Activated T-helper 2 cell treated with anti-CD3 and anti-CD28 coated beads, Interferon-gamma antibody, Interleukin-2, Interleukin-4, amounts not matched to agents 10 μg/mL and 5 μg/mL and 100 μg/mL, durations not matched to agents 14 hours and 24 hours and 36 hours (primary cell): ENCODE measurements at regions of chr6 and their contacts with region 1.

Region 1: GRCh38 chr6:37169496-37170272 is at the start of gene PIM1:
- DNase-seq: peak; percentile 93
- H3K4me3 Mint-ChIP-seq: peak within 1 kb of the TSS; percentile 94
- H3K27ac Mint-ChIP-seq: peak within 1 kb of the TSS; percentile 95
- H3K4me1 Mint-ChIP-seq: peaks cover 35% of the 10 kb centered on the region
- H3K27me3 Mint-ChIP-seq: no peaks in the 10 kb centered on the region
- total RNA-seq, gene PIM1: 151 and 161 TPM in 2 replicates

Region 2: GRCh38 chr6:36216559-36216958 is 953.1 kb before region 1 on chr6:
- intact Hi-C with region 1: no loop called
- DNase-seq: no peak
- H3K4me3 Mint-ChIP-seq: no peak overlapping the region
- H3K27ac Mint-ChIP-seq: no peak overlapping the region
- H3K4me1 Mint-ChIP-seq: peaks cover 8% of the 10 kb centered on the region
- H3K27me3 Mint-ChIP-seq: no peaks in the 10 kb centered on the region

Region 3: GRCh38 chr6:36885461-36886401 is 284.0 kb before region 1 on chr6 and contains the start of gene C6orf89:
- intact Hi-C with region 1: loop called (anchors 1 kb)
- DNase-seq: peak; percentile 95
- H3K4me3 Mint-ChIP-seq: peak within 1 kb of the TSS; percentile 87
- H3K27ac Mint-ChIP-seq: peak within 1 kb of the TSS; percentile 80
- H3K4me1 Mint-ChIP-seq: peaks cover 32% of the 10 kb centered on the region
- H3K27me3 Mint-ChIP-seq: no peaks in the 10 kb centered on the region
- total RNA-seq, gene C6orf89: 28.4 and 29.9 TPM in 2 replicates

Region 4: GRCh38 chr6:37011656-37012378 is 157.9 kb before region 1 on chr6:
- intact Hi-C with region 1: no loop called
- DNase-seq: no peak
- H3K4me3 Mint-ChIP-seq: no peak overlapping the region
- H3K27ac Mint-ChIP-seq: no peak overlapping the region
- H3K4me1 Mint-ChIP-seq: no peaks in the 10 kb centered on the region
- H3K27me3 Mint-ChIP-seq: no peaks in the 10 kb centered on the region

Region 5: DNA sequence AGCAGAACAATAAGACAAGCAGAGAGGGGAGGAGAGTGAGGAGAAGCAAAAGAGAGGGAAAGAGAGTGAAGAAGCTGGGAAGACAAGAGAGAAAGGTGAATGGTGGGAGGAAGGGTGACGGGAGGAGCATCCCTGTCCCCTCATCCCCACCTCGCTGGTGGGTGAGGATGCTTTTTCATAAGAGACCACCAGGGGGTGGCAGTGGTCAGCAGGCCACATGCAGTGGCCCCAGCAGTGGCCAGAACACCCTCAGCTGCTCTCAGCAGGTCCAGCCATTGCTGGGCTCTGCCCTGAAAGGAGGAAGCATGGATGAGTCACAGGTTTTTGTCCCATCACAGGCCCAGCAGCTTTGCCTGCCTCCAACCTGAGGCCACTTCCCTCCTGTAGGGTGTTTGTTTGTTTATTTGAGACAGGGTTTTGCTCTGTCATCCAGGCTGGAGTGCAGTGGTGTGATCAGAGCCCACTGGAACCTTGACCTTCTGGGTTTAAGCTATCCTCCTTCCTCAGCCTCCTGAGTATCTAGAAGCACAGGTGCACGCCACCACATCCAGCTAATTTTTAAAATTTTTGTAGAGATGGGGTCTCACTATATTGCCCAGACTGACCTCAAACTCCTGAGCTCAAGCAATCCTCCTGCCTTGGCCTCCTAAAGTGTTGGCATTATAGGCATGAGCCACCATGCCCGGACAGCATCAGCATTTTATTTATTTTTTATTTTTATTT is 140.3 kb before region 1 on chr6:
- intact Hi-C with region 1: loop called (anchors 1 kb)
- DNase-seq: peak; percentile 33
- H3K4me3 Mint-ChIP-seq: no peak overlapping the region
- H3K27ac Mint-ChIP-seq: peak overlapping the region; percentile 56
- H3K4me1 Mint-ChIP-seq: peaks cover 53% of the 10 kb centered on the region
- H3K27me3 Mint-ChIP-seq: no peaks in the 10 kb centered on the region

Region 6: DNA sequence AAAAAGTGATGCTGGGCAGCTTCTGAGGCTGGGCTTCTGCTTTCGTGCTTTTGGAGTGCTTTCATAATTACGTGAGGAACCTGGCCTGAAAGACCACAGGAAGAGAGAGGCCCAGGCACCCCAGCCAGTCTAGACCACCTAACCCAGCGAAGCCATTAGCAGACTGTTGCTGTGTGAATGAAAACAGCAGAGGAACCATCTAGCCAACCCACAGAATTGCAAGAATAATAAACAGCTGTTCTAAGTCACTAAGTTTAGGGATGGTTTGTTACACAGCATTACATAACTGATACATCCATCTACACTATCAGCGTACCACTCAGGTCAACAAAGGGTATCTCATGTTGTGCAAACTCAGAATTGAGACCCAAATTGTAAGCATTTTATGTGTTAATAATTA is 129.7 kb before region 1 on chr6:
- intact Hi-C with region 1: no loop called
- DNase-seq: no peak
- H3K4me3 Mint-ChIP-seq: no peak overlapping the region
- H3K27ac Mint-ChIP-seq: no peak overlapping the region
- H3K4me1 Mint-ChIP-seq: peaks cover 43% of the 10 kb centered on the region
- H3K27me3 Mint-ChIP-seq: no peaks in the 10 kb centered on the region

Region 7: DNA sequence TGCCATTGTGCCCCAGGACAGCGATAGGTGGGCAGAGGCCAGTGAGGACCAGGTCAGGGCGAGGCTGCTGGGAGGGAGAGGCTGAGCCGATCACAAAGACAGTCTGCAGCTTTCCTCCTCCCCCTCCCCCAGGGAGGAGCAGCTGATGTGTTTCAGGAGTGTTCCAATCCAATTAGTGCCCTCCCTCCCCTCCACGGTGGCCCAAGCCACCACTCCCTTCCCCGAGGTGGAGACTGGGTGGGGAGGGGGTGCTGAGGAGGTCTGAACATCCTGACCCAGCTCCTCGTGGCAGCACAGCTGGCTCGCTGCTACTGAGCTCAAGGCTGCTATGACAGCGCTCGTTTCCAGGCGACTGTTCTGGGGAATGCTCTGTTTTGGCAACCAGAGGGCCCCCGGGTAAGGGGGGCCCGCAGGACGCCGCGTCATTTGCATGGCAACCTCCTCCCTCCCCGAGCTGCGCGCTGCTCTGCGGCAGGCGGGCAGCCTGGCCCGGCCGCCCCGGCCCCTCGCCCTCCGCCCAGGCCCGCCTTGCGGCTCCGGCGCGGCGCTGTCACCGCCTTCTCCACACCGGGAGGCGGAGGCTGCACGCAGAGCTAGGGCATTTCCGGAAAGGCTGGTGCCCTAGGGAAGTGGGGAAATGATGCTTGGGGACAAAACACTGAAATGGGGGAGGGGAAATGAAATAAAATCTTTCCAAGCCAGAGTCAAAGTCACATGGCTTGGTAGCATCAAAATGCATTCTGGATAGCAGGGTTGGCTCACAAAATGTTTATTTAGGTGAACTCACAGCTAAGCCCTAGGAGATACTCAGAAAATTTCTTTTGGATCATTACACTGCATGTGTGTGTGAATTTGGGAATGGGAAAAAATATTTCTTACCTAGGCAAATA is 67.2 kb before region 1 on chr6:
- intact Hi-C with region 1: loop called (anchors 1 kb)
- DNase-seq: peak; percentile 67
- H3K4me3 Mint-ChIP-seq: peak overlapping the region; percentile 72
- H3K27ac Mint-ChIP-seq: peak overlapping the region; percentile 80
- H3K4me1 Mint-ChIP-seq: peaks cover 34% of the 10 kb centered on the region
- H3K27me3 Mint-ChIP-seq: no peaks in the 10 kb centered on the region

Region 8: GRCh38 chr6:37137201-37138090 is 32.2 kb before region 1 on chr6:
- intact Hi-C with region 1: loop called (anchors 5 kb)
- DNase-seq: no peak
- H3K4me3 Mint-ChIP-seq: no peak overlapping the region
- H3K27ac Mint-ChIP-seq: peak overlapping the region; percentile 89
- H3K4me1 Mint-ChIP-seq: peaks cover 36% of the 10 kb centered on the region
- H3K27me3 Mint-ChIP-seq: no peaks in the 10 kb centered on the region

Region 9: GRCh38 chr6:37182736-37183590 is 13.3 kb after region 1 on chr6:
- intact Hi-C with region 1: loop called (anchors 1 kb)
- DNase-seq: peak; percentile 73
- H3K4me3 Mint-ChIP-seq: peak overlapping the region; percentile 52
- H3K27ac Mint-ChIP-seq: peak overlapping the region; percentile 99
- H3K4me1 Mint-ChIP-seq: peaks cover 46% of the 10 kb centered on the region
- H3K27me3 Mint-ChIP-seq: no peaks in the 10 kb centered on the region

Region 10: DNA sequence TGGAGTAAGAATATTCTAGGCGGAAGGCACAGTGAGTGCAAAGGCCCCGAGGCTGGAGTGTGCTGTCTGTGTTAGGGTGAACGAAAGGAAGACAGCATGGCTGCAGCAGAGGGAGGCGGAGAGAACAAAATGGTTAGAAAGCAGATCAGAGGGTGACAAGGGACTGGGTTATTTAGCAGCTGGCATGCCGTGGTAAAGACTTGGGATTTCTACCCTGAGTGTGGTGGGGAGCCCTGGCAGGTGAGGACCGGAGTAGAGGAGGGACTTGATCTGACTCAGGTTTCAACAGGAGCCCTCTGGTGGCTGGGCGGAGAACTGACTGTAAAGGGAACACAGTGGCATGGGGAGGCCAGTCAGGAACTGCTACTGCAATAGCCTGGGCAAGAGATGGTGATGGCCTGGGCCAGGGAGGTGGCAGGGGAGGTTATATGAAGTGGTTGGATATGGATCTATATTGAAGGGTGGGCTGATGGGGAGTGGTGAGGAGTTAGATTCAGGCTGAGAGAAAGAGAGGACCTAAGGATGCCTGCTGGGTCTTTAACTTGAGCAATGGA is 38.3 kb after region 1 on chr6:
- intact Hi-C with region 1: loop called (anchors 1 kb)
- DNase-seq: peak; percentile 85
- H3K4me3 Mint-ChIP-seq: peak overlapping the region; percentile 15
- H3K27ac Mint-ChIP-seq: peak overlapping the region; percentile 76
- H3K4me1 Mint-ChIP-seq: peaks cover 57% of the 10 kb centered on the region
- H3K27me3 Mint-ChIP-seq: no peaks in the 10 kb centered on the region

Region 11: GRCh38 chr6:37222125-37222967 is 52.7 kb after region 1 on chr6:
- intact Hi-C with region 1: no loop called
- DNase-seq: peak; percentile 72
- H3K4me3 Mint-ChIP-seq: peak overlapping the region; percentile 77
- H3K27ac Mint-ChIP-seq: peak overlapping the region; percentile 17
- H3K4me1 Mint-ChIP-seq: peaks cover 18% of the 10 kb centered on the region
- H3K27me3 Mint-ChIP-seq: no peaks in the 10 kb centered on the region